ENCODE measurements at regions of chrX and their contacts with region 1.

Region 1: GRCh38 chrX:136767104-136767941 is 13.4 kb downstream of the ARHGEF6 start:
- DNase-seq: peak; percentile 17
- H3K4me3 Mint-ChIP-seq: peak overlapping the region; percentile 80
- H3K27ac Mint-ChIP-seq: peak overlapping the region; percentile 92
- H3K4me1 Mint-ChIP-seq: peaks cover 56% of the 10 kb centered on the region
- H3K27me3 Mint-ChIP-seq: no peaks in the 10 kb centered on the region

Region 2: DNA sequence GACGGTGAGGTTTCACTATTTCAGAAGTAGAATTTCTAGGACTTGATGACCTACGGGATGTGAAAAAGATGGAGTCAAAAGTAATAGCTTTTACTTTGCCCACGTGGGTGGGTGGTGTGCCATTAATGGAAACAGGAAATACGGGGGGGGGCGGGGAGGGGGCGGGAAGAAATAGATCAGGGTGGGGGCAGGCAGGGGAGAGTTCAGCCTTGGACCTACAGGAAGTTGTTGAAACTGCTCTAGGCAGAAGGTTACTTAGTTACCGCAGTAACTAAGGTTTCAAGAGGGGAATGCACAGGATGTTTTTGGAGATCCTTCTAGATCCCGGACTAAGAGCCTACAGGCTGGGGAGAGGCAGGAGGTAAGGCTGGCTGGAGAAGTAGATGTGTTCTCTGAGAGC is 623.6 kb before region 1 on chrX:
- intact Hi-C with region 1: no loop called
- DNase-seq: no peak
- H3K4me3 Mint-ChIP-seq: peak overlapping the region; percentile 30
- H3K27ac Mint-ChIP-seq: peak overlapping the region; percentile 23
- H3K4me1 Mint-ChIP-seq: peaks cover 20% of the 10 kb centered on the region
- H3K27me3 Mint-ChIP-seq: peaks cover 4% of the 10 kb centered on the region

Region 3: DNA sequence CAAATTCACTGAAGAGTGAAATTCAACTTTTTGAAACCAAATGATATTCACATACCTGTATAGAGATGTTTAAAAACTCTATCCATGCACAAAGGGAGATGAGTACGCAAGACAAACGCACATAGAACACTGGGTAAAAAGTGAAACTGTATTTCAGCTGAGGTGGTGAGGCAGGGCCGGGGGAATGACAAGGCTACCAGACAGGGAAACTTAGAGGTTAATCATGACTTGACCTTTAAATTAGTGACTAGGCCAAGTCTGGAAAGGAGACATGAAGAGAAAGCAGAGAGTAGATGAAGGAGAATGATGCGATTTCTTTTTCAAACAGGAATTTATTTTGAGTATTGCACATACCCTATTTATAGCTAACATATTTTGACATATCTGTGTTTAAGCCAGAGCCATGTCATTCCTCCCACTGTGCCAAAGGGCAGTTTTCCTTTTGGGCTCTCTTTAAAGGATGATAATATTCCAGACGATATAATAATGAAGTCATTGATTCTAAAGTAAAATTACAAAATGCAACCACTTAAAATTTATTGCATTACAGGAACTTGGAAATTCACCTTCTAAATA is 36.0 kb before region 1 on chrX:
- intact Hi-C with region 1: loop called (anchors 5 kb)
- DNase-seq: no peak
- H3K4me3 Mint-ChIP-seq: peak overlapping the region; percentile 45
- H3K27ac Mint-ChIP-seq: peak overlapping the region; percentile 70
- H3K4me1 Mint-ChIP-seq: peaks cover 48% of the 10 kb centered on the region
- H3K27me3 Mint-ChIP-seq: no peaks in the 10 kb centered on the region

Region 4: GRCh38 chrX:136752796-136753195 is 14.5 kb before region 1 on chrX:
- intact Hi-C with region 1: loop called (anchors 1 kb)
- DNase-seq: no peak
- H3K4me3 Mint-ChIP-seq: no peak overlapping the region
- H3K27ac Mint-ChIP-seq: no peak overlapping the region
- H3K4me1 Mint-ChIP-seq: peaks cover 64% of the 10 kb centered on the region
- H3K27me3 Mint-ChIP-seq: no peaks in the 10 kb centered on the region

Region 5: GRCh38 chrX:136880452-136881013 is 113.2 kb after region 1 on chrX and contains the start of gene RBMX:
- intact Hi-C with region 1: loop called (anchors 2 kb)
- DNase-seq: peak; percentile 84
- H3K4me3 Mint-ChIP-seq: peak within 1 kb of the TSS; percentile 98
- H3K27ac Mint-ChIP-seq: peak within 1 kb of the TSS; percentile 99
- H3K4me1 Mint-ChIP-seq: peaks cover 6% of the 10 kb centered on the region
- H3K27me3 Mint-ChIP-seq: no peaks in the 10 kb centered on the region
- total RNA-seq, gene RBMX: 308 and 327 TPM in 2 replicates

Measured in activated T-helper 1 cell treated with anti-CD3 and anti-CD28 coated beads, Interleukin-12 subunit alpha, Interleukin-12 subunit beta, Interleukin-2, Interleukin-4 antibody, amounts not matched to agents 30 ng/mL and 10 ng/mL and 1 ng/mL, durations not matched to agents 14 hours and 24 hours and 36 hours (primary cell).